Activated CD4-positive, alpha-beta memory T cell treated with anti-CD3 and anti-CD28 coated beads for 36 hours (primary cell): ENCODE measurements at regions of chr4 and their contacts with region 1.

Region 1: DNA sequence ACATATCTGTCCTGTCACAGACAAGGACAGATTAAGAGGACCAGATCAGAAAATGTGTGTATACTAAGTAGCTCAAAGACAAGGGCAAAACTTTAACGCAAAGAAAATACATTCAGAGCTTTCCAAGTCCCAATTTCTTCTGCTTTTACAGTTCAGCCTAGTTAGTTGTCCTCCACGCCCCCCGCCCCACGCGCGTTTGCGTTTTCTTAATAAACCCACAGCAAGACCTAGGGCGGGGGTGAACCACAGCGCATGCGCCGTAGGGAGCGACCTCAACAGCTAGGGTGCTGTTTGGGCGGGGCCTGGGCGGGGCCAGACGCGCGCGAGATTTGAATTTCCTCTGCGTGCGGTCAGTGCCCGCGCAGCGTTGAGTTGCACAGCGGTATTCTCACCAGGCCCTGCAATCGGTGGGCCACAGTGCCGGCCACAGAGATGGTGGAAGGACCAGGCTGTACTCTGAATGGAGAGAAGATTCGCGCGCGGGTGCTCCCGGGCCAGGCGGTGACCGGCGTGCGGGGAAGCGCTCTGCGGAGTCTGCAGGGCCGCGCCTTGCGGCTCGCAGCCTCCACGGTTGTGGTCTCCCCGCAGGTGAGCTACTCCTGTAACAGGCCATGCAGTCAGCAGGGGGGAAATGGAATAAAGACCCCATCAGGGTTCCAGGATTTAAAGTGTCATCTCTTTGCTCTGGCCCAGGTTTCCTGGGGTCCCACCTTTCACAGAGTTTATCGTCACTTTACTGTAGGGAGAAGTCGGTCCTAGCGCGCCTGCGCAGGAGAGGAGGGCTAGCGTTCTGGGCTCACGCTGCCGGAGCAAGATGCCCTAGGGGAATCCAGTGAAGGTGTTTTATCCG is at the start of gene NEIL3:
- DNase-seq: peak; percentile 97
- H3K4me3 Mint-ChIP-seq: peak within 1 kb of the TSS; percentile 92
- H3K27ac Mint-ChIP-seq: peak within 1 kb of the TSS; percentile 79
- H3K4me1 Mint-ChIP-seq: peaks cover 25% of the 10 kb centered on the region
- H3K27me3 Mint-ChIP-seq: no peaks in the 10 kb centered on the region
- total RNA-seq, gene NEIL3: 18.2 to 18.3 TPM

Region 2: GRCh38 chr4:177339477-177340374 is 30.0 kb after region 1 on chr4:
- CTCF ChIA-PET with region 1: interaction called, 4 read pairs
- POLR2A ChIA-PET with region 1: no interaction called
- intact Hi-C with region 1: loop called (anchors 1 kb)
- DNase-seq: no peak
- H3K4me3 Mint-ChIP-seq: no peak overlapping the region
- H3K27ac Mint-ChIP-seq: no peak overlapping the region
- H3K4me1 Mint-ChIP-seq: peaks cover 12% of the 10 kb centered on the region
- H3K27me3 Mint-ChIP-seq: no peaks in the 10 kb centered on the region

Region 3: GRCh38 chr4:177403746-177404145 is 94.0 kb after region 1 on chr4:
- CTCF ChIA-PET with region 1: no interaction called
- POLR2A ChIA-PET with region 1: no interaction called
- intact Hi-C with region 1: loop called (anchors 1 kb)
- DNase-seq: no peak
- H3K4me3 Mint-ChIP-seq: no peak overlapping the region
- H3K27ac Mint-ChIP-seq: no peak overlapping the region
- H3K4me1 Mint-ChIP-seq: peaks cover 36% of the 10 kb centered on the region
- H3K27me3 Mint-ChIP-seq: peaks cover 1% of the 10 kb centered on the region

Region 4: GRCh38 chr4:177441803-177442622 is 132.3 kb after region 1 on chr4 and contains the start of gene AGA:
- CTCF ChIA-PET with region 1: no interaction called
- POLR2A ChIA-PET with region 1: interaction called, 22 read pairs
- intact Hi-C with region 1: loop called (anchors 1 kb)
- DNase-seq: peak; percentile 97
- H3K4me3 Mint-ChIP-seq: peak within 1 kb of the TSS; percentile 90
- H3K27ac Mint-ChIP-seq: peak within 1 kb of the TSS; percentile 97
- H3K4me1 Mint-ChIP-seq: peaks cover 24% of the 10 kb centered on the region
- H3K27me3 Mint-ChIP-seq: no peaks in the 10 kb centered on the region
- total RNA-seq, gene AGA: 22.1 to 22.5 TPM